PC-3 (cell line): ENCODE measurements at regions of chr16 and their contacts with region 1.

Region 1: DNA sequence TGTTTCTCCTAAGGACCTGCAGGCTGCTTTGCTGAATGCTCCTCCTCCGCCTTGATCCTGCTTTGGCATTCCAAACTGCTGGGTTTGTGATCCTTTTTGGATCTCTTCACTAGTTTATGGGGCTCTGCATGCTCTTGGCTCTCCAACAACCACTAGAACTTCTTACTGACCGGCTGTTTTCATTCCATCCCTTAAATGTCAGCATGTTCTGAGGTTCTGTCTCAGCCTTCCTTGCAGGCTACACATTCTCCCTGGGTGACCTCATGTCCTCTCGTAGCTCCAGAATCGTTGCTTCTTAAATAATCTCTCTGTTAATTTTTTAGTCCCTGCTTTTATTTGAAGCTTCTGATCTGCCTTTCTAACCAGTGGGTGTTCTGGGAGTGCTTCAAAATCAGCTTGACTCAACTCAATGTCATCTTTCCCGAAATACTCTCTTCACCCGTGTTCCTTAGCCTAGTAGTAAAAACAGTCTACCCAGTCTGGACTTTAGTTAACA is 119.0 kb upstream of the HS3ST2 start:
- DNase-seq: no peak
- ATAC-seq: no peak
- H3K4me3 ChIP-seq: no peak overlapping the region
- H3K27ac ChIP-seq: no peak overlapping the region
- H3K4me1 ChIP-seq: no peaks in the 10 kb centered on the region
- H3K27me3 ChIP-seq: no peaks in the 10 kb centered on the region
- CTCF ChIP-seq: no peak

Region 2: GRCh38 chr16:22141746-22142145 is 553.2 kb before region 1 on chr16:
- CTCF ChIA-PET with region 1: no interaction called
- POLR2A ChIA-PET with region 1: interaction called, 12 read pairs
- intact Hi-C with region 1: no loop called
- DNase-seq: peak; percentile 30
- ATAC-seq: peak; percentile 57
- H3K4me3 ChIP-seq: no peak overlapping the region
- H3K27ac ChIP-seq: no peak overlapping the region
- H3K4me1 ChIP-seq: no peaks in the 10 kb centered on the region
- H3K27me3 ChIP-seq: 0 out of 2 replicates have a peak, but pooled peaks cover 4% of the 10 kb centered on the region
- CTCF ChIP-seq: peak; percentile 60